Left cardiac atrium (tissue), 4 donors: ENCODE measurements at regions of chr5 and their contacts with region 1.

Region 1: GRCh38 chr5:1948663-1949652 is 66.2 kb upstream of the IRX4 start:
- DNase-seq: peak; percentile 76
- ATAC-seq: peak; percentile 85 to 86

Region 2: GRCh38 chr5:1799602-1800471 is 149.1 kb before region 1 on chr5 and contains the start of gene MRPL36:
- intact Hi-C with region 1: loop called in 1 of 2 experiments (anchors 5 kb)
- DNase-seq: peak; percentile 94
- ATAC-seq: peak; percentile 93 to 94
- total RNA-seq, gene MRPL36: 47.3 to 50.9 TPM

Region 3: GRCh38 chr5:1889321-1890065 is 59.5 kb before region 1 on chr5:
- intact Hi-C with region 1: no loop called
- DNase-seq: peak; percentile 12
- ATAC-seq: no peak